CD4-positive, alpha-beta memory T cell (primary cell): ENCODE measurements at regions of chr12 and their contacts with region 1.

Region 1: DNA sequence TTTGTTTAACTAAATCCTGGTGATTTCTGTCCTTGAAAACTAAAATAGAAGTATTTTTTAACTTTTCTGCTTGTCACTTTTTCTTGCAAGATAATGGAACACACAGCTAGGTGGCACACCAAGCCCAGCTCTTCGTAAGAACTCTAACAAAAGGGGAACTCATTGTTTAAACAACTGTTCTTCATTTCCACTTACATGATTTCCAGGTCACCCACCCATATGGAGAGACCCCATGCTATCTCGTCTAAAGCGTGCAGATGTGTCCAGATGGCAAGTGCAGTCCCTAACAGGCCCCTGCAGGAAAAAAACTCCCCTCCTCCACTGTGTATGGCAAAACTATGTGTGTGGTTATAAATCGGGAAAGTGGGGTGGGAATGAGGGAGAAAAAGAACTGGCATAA is 43.3 kb upstream of the NT5DC3 start:
- DNase-seq: peak; percentile 33 to 52 (median 41)
- H3K4me3 ChIP-seq: no peak overlapping the region
- H3K4me3 Mint-ChIP-seq: peak overlapping the region in 1 of 8 donors; percentile 4
- H3K27ac ChIP-seq: no peak overlapping the region
- H3K27ac Mint-ChIP-seq: peak overlapping the region in 5 of 7 donors; percentile 12 to 44 (median 26)
- H3K4me1 ChIP-seq: peaks cover 4% of the 10 kb centered on the region
- H3K4me1 Mint-ChIP-seq: peaks cover 6 to 24% (median 12%) of the 10 kb centered on the region in 4 donors
- H3K27me3 ChIP-seq: no peaks in the 10 kb centered on the region
- H3K27me3 Mint-ChIP-seq: no peaks in the 10 kb centered on the region

Region 2: DNA sequence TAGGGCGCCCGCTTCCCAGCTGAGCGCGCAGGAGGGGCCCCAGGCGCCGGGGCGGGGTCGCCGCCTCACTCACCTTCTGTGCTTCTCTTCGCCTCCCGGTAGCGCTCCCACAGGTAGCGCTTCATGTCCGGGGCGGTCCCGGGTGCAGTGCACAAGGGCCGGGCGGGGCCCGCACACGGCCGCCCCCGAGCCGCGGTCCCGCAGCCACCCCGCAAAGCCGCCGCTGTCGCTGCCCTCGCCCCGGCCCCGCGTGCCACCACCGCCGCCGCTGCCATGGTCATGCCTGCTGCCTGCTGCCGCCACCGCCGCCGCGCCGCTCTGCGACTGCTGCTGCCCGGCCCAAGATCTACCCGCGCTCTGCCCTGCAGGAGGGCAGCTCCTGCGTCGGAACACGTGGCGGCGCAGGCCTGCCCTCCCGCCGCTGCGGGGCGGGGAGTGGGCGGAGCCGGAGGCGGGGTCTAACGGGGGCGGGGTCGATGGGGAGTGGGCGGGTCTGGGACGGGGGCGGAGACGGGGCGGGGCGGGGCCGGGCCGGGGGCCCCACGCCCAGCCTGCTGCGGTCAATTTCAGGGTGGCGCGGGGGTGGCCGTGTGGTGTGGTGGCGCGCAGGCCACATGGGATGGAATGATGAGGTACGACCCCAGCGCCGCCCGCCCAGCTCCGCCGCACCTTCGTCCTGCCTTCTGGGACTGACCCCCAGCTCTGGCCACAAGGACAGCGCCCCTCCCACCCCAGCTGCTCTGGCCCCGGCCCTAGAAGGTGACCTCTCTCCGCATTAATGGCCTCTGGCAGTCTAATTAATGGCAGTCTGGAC is 43.2 kb before region 1 on chr12 and contains the start of gene NT5DC3:
- CTCF ChIA-PET with region 1: no interaction called
- POLR2A ChIA-PET with region 1: no interaction called
- intact Hi-C with region 1: no loop called
- DNase-seq: peak; percentile 80 to 90 (median 86)
- H3K4me3 ChIP-seq: peak within 1 kb of the TSS; percentile 44 to 63
- H3K4me3 Mint-ChIP-seq: peak within 1 kb of the TSS; percentile 87 to 97 (median 89)
- H3K27ac ChIP-seq: peak within 1 kb of the TSS; percentile 35
- H3K27ac Mint-ChIP-seq: peak within 1 kb of the TSS; percentile 69 to 90 (median 86)
- H3K4me1 ChIP-seq: peaks cover 14% of the 10 kb centered on the region
- H3K4me1 Mint-ChIP-seq: peaks cover 6 to 26% (median 13%) of the 10 kb centered on the region in 4 donors
- H3K27me3 ChIP-seq: no peaks in the 10 kb centered on the region
- H3K27me3 Mint-ChIP-seq: no peaks in the 10 kb centered on the region
- total RNA-seq, gene NT5DC3: 6.1 to 6.8 TPM

Region 3: GRCh38 chr12:103956516-103957027 is 72.3 kb after region 1 on chr12:
- CTCF ChIA-PET with region 1: interaction called, 4 read pairs
- POLR2A ChIA-PET with region 1: no interaction called
- intact Hi-C with region 1: loop called (anchors 1 kb)
- DNase-seq: peak in 2 of 5 donors; percentile 2 to 34
- H3K4me3 ChIP-seq: peak overlapping the region; percentile 61 to 96
- H3K4me3 Mint-ChIP-seq: peak overlapping the region; percentile 97 to 100 (median 98)
- H3K27ac ChIP-seq: peak overlapping the region; percentile 75
- H3K27ac Mint-ChIP-seq: peak overlapping the region; percentile 91 to 100 (median 99)
- H3K4me1 ChIP-seq: peaks cover 16% of the 10 kb centered on the region
- H3K4me1 Mint-ChIP-seq: peaks cover 20 to 48% (median 36%) of the 10 kb centered on the region in 4 donors
- H3K27me3 ChIP-seq: no peaks in the 10 kb centered on the region
- H3K27me3 Mint-ChIP-seq: no peaks in the 10 kb centered on the region